Motor neuron (in vitro differentiated cells): ENCODE measurements at regions of chr6 and their contacts with region 1.

Region 1: GRCh38 chr6:111210194-111210728 is 123.0 kb downstream of the SLC16A10 start:
- ATAC-seq: peak in 4 of 8 experiments; percentile 30 to 79 (median 73)
- H3K4me3 ChIP-seq: no peak overlapping the region
- H3K27ac ChIP-seq: no peak overlapping the region
- H3K4me1 ChIP-seq: no peaks in the 10 kb centered on the region

Region 2: DNA sequence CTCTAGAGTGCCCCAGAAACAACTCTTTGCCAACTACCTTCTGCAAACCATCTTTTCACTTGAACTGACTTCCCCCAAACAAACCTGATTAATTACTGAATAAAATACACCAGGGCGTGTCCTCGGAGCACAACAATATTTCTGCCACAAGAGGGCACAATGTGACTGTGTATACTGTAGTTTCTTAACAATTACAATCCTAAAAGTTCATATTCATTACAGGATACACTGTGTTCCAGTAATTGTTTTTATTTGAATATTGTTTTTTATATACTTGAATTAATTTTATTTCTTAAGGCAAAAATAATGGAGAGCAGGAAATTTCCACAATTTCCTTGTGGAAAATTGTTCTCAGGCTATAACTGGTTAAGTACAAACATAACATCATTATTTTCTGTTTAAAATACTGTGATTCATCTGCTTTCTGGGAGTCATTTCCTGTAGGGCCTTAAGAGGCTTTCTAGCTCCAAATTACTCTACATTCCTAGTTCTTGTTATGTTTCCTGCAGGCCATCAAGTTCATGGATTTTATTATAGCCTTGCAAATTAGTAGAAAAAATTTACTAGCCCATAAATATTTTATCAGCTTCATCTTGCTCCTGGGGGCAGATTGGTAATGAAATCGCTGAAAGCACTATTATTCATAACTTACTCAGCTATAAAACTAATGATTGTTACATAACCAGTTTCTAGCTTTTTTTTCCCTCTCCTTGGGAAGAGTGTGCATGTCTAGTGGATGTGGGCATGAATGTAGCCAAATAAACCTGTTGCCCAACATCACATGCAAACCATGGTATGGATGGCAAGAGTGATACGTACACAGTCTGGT is 681.9 kb before region 1 on chr6:
- in situ Hi-C with region 1: loop called in 1 of 9 experiments (anchors 25 kb)
- ATAC-seq: peak; percentile 47 to 89 (median 62)
- H3K4me3 ChIP-seq: no peak overlapping the region
- H3K27ac ChIP-seq: no peak overlapping the region
- H3K4me1 ChIP-seq: peaks cover 0 to 4% of the 10 kb centered on the region in 2 donors

Region 3: GRCh38 chr6:111038534-111039252 is 171.6 kb before region 1 on chr6:
- in situ Hi-C with region 1: no loop called
- ATAC-seq: no peak
- H3K4me3 ChIP-seq: no peak overlapping the region
- H3K27ac ChIP-seq: no peak overlapping the region
- H3K4me1 ChIP-seq: no peaks in the 10 kb centered on the region

Region 4: DNA sequence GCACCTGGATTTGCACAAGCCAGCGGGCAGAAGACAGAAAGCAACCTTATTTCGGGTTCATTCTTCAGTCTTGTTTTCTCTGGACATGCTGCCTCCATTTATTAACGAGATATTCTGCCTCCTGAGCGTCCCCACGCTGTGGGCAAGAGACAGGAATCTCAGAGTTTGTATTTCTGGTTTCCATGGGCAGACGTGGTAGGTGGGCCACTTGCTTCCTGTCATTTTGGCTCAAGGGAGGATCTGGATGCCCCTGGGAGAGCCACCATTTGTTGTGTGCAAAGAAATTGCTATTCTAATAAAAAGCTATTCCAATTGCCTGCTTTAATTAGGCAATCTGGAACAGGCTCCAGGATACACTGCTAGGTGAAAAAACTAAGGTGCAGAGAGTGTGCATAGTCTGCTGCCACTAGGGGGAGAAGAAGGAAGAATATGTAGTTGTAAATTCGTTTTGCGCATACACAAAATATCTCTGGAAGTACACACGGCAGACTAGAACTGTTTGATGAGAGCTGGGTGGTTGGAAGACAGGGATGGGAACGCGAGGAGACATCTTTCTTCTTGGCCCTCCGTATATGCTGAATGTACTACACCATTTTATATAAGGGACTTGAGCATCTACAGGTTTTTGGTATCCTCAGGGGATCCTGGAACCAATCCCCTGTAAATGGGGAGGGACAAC is 153.0 kb before region 1 on chr6:
- in situ Hi-C with region 1: loop called in 3 of 9 experiments (anchors 10 to 25 kb)
- ATAC-seq: peak in 7 of 8 experiments; percentile 36 to 97 (median 73)
- H3K4me3 ChIP-seq: no peak overlapping the region
- H3K27ac ChIP-seq: no peak overlapping the region
- H3K4me1 ChIP-seq: no peaks in the 10 kb centered on the region

Region 5: GRCh38 chr6:111781041-111781708 is 570.9 kb after region 1 on chr6:
- in situ Hi-C with region 1: no loop called
- ATAC-seq: peak in 1 of 8 experiments; percentile 63
- H3K4me3 ChIP-seq: no peak overlapping the region
- H3K27ac ChIP-seq: no peak overlapping the region
- H3K4me1 ChIP-seq: peaks cover 17 to 19% of the 10 kb centered on the region in 2 donors